Activated CD4-positive, alpha-beta memory T cell treated with anti-CD3 and anti-CD28 coated beads, Interleukin-2, amount 10 ng/mL, durations not matched to agents 7 days and 5 days (primary cell): ENCODE measurements at regions of chrX and their contacts with region 1.

Region 1: DNA sequence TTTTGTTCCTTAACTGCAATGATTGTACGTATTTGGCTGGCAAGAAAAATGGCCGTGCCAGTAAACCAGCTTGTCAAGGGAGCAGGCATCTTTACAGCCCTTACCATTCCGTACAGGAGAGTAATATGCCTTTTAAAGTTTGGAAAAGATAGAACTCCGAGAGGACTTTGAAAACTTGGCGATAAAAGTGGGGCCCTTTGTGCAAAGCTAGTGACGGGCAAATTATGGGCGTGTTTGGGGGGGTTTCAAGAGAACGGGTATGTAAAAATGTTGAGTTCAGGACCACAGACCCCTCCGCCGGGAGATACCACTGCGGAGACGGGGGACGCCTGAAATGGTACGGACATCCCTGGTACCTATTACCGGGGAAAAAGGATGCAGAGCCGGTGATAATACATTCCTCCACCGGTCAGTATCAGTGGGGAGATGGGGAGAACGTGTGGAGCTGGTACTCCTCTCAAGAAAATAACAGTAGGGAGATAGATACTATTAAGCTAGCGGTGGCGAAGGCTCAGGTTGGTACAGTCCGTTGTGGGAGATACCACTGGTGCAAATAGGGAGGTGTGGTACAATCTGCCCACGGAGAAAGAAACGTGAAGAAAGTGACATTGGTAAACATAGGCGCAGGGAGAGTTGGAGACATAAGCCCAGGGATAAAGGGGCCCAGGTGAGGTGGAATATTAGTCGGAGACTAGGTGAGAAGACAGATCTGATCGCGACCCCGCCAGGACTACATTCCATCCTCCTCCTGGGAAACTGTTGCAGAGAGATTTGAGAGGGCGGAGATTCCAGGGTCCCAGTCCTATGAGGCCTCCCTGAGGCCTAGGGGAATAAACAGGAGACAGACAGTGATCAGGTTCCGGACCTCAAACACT is 14.5 kb downstream of the SPACA5 start:
- DNase-seq: peak; percentile 67
- H3K4me3 Mint-ChIP-seq: peak overlapping the region; percentile 78
- H3K27ac Mint-ChIP-seq: peak overlapping the region; percentile 79
- H3K4me1 Mint-ChIP-seq: peaks cover 13% of the 10 kb centered on the region
- H3K27me3 Mint-ChIP-seq: peaks cover 2% of the 10 kb centered on the region

Region 2: DNA sequence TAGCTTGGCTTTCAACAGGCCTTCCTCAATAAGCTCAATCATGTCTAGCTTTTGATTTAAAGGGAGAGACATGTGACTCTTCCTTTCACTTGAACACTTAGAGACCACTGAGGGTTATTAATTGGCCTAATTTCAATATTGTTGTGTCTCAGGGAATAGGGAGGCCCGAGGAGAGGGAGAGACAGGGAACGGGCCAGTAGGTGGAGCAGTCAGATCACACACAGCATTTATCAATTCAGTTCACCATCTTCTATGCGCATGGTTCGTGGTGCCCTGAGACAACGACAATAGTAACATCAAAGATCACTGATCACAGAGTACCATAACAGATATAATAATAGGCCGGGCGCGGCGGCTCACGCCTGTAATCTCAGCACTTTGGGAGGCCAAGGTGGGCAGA is 166.8 kb before region 1 on chrX:
- CTCF ChIA-PET with region 1: interaction called, 14 read pairs
- POLR2A ChIA-PET with region 1: no interaction called
- DNase-seq: peak; percentile 16
- H3K4me3 Mint-ChIP-seq: no peak overlapping the region
- H3K27ac Mint-ChIP-seq: no peak overlapping the region
- H3K4me1 Mint-ChIP-seq: no peaks in the 10 kb centered on the region
- H3K27me3 Mint-ChIP-seq: no peaks in the 10 kb centered on the region